ENCODE measurements at regions of chr16 and their contacts with region 1.

Region 1: DNA sequence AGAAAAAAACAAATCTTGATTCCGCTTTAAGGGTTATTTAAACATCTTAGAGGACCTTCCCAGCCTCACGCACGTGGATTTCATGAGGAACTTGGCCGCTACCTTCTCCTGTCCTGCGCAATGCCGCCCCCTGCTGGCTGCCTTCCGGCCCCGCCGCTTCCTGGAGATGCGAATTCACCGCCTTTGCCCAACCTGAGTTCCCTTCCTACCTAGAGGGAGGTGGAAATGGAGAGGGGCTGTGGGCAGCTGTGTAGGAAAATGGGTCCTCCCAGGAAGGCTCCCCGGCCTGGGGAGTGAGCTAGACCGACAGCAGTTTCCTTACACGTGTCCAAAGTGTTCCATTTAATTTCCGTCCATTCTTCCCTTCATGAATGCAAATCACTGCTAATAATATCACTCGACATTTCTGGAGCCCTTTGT is 1.0 kb upstream of the ABCC12 start:
- DNase-seq: peak; percentile 95
- H3K4me3 Mint-ChIP-seq: peak overlapping the region; percentile 32
- H3K27ac Mint-ChIP-seq: peak overlapping the region; percentile 68
- H3K4me1 Mint-ChIP-seq: peaks cover 32% of the 10 kb centered on the region
- H3K27me3 Mint-ChIP-seq: peaks cover 20% of the 10 kb centered on the region

Region 2: DNA sequence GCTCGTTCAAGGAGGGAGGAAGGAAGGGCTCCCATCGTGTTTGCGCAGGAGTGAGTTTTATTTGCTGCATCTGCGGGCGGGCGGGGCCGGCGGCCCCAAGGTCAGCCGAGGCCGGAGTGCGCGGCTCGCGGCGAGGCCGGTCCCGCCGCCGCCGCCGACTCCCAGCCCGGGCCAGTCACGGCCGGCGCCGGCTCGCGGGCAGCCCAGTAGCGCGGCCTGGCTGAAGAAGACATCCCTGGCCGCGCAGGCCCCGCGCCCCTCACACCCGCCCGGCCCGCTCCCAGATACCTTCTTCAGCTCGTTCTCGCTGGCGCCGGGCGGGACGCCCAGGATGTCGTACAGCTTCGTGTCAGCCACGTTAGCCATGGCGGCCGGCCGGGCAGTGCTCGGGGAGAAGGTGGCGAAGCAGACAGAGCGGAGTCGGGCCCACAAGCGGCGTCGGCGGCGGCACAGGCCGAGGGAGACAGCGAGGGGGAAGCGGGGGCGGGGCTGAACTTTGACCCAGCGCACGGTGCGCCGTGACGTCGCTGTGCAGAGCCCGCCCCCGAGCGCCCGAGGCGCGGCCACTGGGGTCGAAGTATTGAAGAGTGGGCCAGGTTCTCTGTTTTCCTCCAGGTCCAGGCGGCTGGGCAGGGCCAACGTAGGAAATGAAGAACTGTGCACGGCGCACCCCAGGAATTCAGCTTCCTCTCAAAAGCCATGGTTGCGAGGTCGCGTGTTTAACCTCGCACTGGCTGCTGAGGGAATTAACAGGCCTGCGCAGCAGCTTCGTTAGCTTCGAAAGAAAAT is 1183.4 kb before region 1 on chr16 and contains the start of gene DNAJA2:
- intact Hi-C with region 1: loop called (anchors 1 kb)
- DNase-seq: peak; percentile 97
- H3K4me3 Mint-ChIP-seq: peak within 1 kb of the TSS; percentile 98
- H3K27ac Mint-ChIP-seq: peak within 1 kb of the TSS; percentile 98
- H3K4me1 Mint-ChIP-seq: peaks cover 48% of the 10 kb centered on the region
- H3K27me3 Mint-ChIP-seq: no peaks in the 10 kb centered on the region
- total RNA-seq, gene DNAJA2: 81.7 and 84.2 TPM in 2 replicates

Region 3: GRCh38 chr16:47110939-47111338 is 1045.9 kb before region 1 on chr16:
- intact Hi-C with region 1: loop called (anchors 1 kb)
- DNase-seq: no peak
- H3K4me3 Mint-ChIP-seq: no peak overlapping the region
- H3K27ac Mint-ChIP-seq: no peak overlapping the region
- H3K4me1 Mint-ChIP-seq: peaks cover 10% of the 10 kb centered on the region
- H3K27me3 Mint-ChIP-seq: no peaks in the 10 kb centered on the region

Region 4: GRCh38 chr16:47460711-47461597 is 695.8 kb before region 1 on chr16 and contains the starts of genes ITFG1 and PHKB:
- intact Hi-C with region 1: loop called (anchors 1 kb)
- DNase-seq: peak; percentile 99
- H3K4me3 Mint-ChIP-seq: peak within 1 kb of the TSS; percentile 94
- H3K27ac Mint-ChIP-seq: peak within 1 kb of the TSS; percentile 97
- H3K4me1 Mint-ChIP-seq: peaks cover 36% of the 10 kb centered on the region
- H3K27me3 Mint-ChIP-seq: no peaks in the 10 kb centered on the region
- total RNA-seq, gene ITFG1: 26.1 and 28.5 TPM in 2 replicates
- total RNA-seq, gene PHKB: 23.7 and 27.9 TPM in 2 replicates

Region 5: GRCh38 chr16:47732523-47733111 is 424.2 kb before region 1 on chr16:
- intact Hi-C with region 1: loop called (anchors 1 kb)
- DNase-seq: peak; percentile 74
- H3K4me3 Mint-ChIP-seq: peak overlapping the region; percentile 4
- H3K27ac Mint-ChIP-seq: peak overlapping the region; percentile 88
- H3K4me1 Mint-ChIP-seq: peaks cover 23% of the 10 kb centered on the region
- H3K27me3 Mint-ChIP-seq: peaks cover 2% of the 10 kb centered on the region

Region 6: GRCh38 chr16:48029768-48030167 is 127.0 kb before region 1 on chr16:
- intact Hi-C with region 1: no loop called
- DNase-seq: no peak
- H3K4me3 Mint-ChIP-seq: no peak overlapping the region
- H3K27ac Mint-ChIP-seq: no peak overlapping the region
- H3K4me1 Mint-ChIP-seq: no peaks in the 10 kb centered on the region
- H3K27me3 Mint-ChIP-seq: no peaks in the 10 kb centered on the region

Region 7: GRCh38 chr16:48100696-48101674 is 55.8 kb before region 1 on chr16:
- intact Hi-C with region 1: loop called (anchors 5 kb)
- DNase-seq: no peak
- H3K4me3 Mint-ChIP-seq: no peak overlapping the region
- H3K27ac Mint-ChIP-seq: no peak overlapping the region
- H3K4me1 Mint-ChIP-seq: peaks cover 11% of the 10 kb centered on the region
- H3K27me3 Mint-ChIP-seq: peaks cover 11% of the 10 kb centered on the region

Region 8: DNA sequence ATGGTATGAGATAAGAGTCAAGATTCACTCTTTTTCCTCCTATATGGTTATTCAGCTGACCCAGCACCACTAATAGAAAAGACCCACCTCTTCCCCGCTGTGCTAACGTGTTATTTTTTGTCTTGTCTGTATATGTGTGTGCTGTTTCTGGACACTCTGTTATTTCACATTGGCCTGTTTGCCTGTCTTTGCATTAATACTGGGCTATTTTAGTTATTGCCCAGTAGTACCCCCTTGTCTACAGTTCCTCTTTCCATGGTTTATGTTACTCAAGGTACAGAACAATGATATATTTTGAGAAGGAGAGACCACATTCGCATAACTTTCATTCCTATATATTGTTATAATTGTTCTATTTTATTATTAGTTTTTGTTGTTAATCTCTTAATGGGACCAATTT is 302.4 kb after region 1 on chr16:
- intact Hi-C with region 1: loop called (anchors 2 kb)
- DNase-seq: no peak
- H3K4me3 Mint-ChIP-seq: no peak overlapping the region
- H3K27ac Mint-ChIP-seq: peak overlapping the region; percentile 22
- H3K4me1 Mint-ChIP-seq: peaks cover 12% of the 10 kb centered on the region
- H3K27me3 Mint-ChIP-seq: peaks cover 24% of the 10 kb centered on the region